BJ (cell line): ENCODE measurements at regions of chr4 and their contacts with region 1.

Region 1: GRCh38 chr4:139740531-139741041 is 75.0 kb downstream of the MGST2 start:
- DNase-seq: peak; percentile 64
- H3K4me3 ChIP-seq: no peak overlapping the region
- H3K27me3 ChIP-seq: peaks cover 2% of the 10 kb centered on the region; the same call in 1 of the 2 replicates
- CTCF ChIP-seq: peak; percentile 45

Region 2: DNA sequence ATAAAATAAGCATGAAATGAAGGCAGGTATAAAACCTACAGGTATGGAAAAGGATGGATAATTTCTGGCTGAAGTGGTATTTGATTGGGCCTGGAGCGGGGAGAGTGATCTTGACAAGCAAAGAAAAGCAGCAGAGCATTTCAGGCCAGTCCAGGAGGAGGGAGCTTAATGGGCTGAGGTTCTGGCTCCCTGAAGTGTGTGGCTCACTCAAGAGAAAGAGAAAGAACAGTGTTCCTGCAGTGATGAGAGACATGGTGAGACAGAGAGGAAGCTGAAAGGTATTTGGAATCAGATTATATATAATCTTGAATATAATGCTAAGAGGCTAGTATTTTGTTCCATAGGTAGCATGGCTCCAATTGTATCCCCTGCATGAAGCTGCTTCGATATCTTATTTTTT is 78.5 kb after region 1 on chr4:
- CTCF ChIA-PET with region 1: no interaction called
- POLR2A ChIA-PET with region 1: interaction called, 11 read pairs
- DNase-seq: no peak
- H3K4me3 ChIP-seq: no peak overlapping the region
- H3K27me3 ChIP-seq: 0 out of 2 replicates have a peak, but pooled peaks cover 1% of the 10 kb centered on the region
- CTCF ChIP-seq: no peak